Dendritic cell treated with granulocyte-macrophage colony-stimulating factor and Interleukin-4, amounts not matched to agents 40 ng/mL and 50 ng/mL, for 4 days (primary cell): ENCODE measurements at regions of chr2 and their contacts with region 1.

Region 1: GRCh38 chr2:19786408-19787058 is 115.2 kb downstream of the TTC32 start:
- H3K4me3 Mint-ChIP-seq: no peak overlapping the region
- H3K27ac Mint-ChIP-seq: peak overlapping the region; percentile 71
- H3K4me1 Mint-ChIP-seq: peaks cover 21% of the 10 kb centered on the region
- H3K27me3 Mint-ChIP-seq: peaks cover 9% of the 10 kb centered on the region

Region 2: DNA sequence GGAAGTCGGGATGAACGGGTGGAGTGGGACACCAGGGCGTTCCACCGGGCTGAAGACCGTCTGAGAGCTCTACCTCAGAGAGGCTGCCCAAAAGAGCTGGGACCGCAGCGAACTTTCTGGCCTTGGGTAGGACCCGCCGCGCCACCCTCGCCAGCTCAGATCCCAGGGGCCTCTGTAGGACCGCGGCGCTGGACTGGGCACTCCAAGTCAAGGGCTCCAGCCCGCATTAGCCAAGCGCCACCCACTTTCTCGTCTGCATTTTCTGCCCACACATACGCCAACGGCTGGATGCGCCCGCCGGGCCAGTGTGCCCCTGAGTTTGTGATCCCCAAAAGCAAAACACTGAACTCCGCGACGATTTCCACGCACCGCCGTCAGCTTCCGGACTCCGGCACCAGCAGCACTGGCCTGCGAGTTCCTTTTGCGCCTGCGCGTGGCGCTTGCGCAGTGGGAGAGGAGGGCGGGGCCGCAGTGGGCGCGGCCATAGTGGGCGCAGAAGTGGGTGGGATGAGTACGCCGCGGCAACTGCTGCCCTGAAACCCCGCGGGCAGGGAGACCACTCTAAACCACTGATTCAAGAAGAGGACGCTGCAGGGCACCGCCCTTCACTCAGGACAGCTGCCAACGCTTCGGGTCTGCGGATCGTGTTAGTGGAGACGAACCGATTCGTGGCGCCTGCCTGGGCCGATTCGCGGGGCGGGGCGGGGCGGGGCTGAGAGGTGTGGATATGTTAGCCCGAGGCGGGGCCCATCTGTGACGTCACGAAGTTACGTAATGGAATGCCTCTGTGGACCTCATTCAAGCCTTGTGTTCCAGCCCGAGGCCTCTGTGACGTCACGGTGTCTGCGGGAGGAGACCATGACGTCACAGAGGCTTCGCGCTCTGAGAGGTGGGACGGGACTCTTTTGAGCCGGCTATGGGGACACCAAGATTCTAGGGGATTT is 438.6 kb before region 1 on chr2:
- intact Hi-C with region 1: loop called (anchors 10 kb)
- H3K4me3 Mint-ChIP-seq: peak overlapping the region; percentile 97
- H3K27ac Mint-ChIP-seq: peak overlapping the region; percentile 100
- H3K4me1 Mint-ChIP-seq: peaks cover 31% of the 10 kb centered on the region
- H3K27me3 Mint-ChIP-seq: peaks cover 45% of the 10 kb centered on the region